ENCODE measurements at regions of chr14 and their contacts with region 1.

Region 1: GRCh38 chr14:58199726-58200479 is at the start of gene ACTR10:
- DNase-seq: peak; percentile 80 to 93 (median 88)
- ATAC-seq: peak; percentile 94
- H3K4me3 ChIP-seq: peak within 1 kb of the TSS; percentile 75
- H3K4me3 Mint-ChIP-seq: peak within 1 kb of the TSS; percentile 90 to 99 (median 97)
- H3K27ac ChIP-seq: peak within 1 kb of the TSS; percentile 87
- H3K27ac Mint-ChIP-seq: peak within 1 kb of the TSS; percentile 93 to 99 (median 98)
- H3K4me1 ChIP-seq: peaks cover 15 to 27% of the 10 kb centered on the region in 2 donors
- H3K4me1 Mint-ChIP-seq: peaks cover 21 to 60% (median 48%) of the 10 kb centered on the region in 7 donors
- H3K27me3 ChIP-seq: no peaks in the 10 kb centered on the region
- H3K27me3 Mint-ChIP-seq: peaks cover 0 to 7% (median 0%) of the 10 kb centered on the region in 5 donors
- total RNA-seq, gene ACTR10: 40.0 to 54.6 (median 50.4) TPM

Region 2: DNA sequence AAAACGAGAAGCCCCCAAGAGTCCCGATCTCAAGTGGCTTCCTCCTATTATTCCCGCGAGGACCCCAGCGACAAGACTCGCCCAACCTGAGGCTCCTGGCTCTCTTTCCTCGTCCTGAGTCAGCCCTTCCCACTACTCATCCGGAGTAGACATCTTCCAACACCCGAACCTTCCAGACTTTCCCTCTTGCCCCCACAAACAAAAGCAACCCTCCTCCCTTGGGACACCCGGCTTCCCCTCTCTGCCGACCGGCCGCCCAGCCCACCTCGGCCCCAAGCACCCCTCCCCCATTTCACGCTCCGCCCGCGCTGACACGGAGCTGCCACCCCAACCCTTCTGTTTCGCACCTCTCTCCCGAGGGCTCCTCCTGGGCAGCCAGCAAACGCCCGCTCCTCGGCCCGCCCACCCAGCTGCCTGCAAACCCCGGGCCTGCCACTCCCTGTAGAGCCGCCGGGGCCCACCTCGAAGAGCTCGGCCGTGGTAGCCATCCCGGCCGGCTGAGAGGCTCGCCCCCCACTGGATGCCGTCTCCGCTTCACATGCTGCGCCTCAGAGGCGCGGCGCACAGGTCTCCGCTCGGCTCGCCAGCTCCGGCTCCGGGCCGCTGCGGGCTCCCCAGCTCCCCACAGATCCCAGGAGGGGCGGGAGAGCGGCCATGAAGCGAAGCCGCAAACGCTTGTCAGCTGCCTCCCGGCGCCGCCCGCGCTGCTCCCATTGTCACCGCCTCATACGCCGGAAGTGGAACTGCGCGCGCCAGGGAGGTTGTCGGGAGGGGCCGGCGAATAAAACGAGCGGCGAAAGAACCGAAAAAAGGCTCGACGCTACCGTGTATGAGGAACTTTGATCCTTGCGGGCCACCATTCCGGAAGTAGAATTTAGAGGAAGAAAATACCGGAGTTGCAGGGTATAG is 931.5 kb before region 1 on chr14 and contains the starts of genes AP5M1 and EXOC5:
- CTCF ChIA-PET with region 1: no interaction called
- POLR2A ChIA-PET with region 1: interaction called, 3 read pairs
- intact Hi-C with region 1: loop called in 1 of 2 experiments (anchors 5 kb)
- DNase-seq: peak; percentile 78 to 95 (median 93)
- ATAC-seq: peak; percentile 89
- H3K4me3 ChIP-seq: peak within 1 kb of the TSS; percentile 89
- H3K4me3 Mint-ChIP-seq: peak within 1 kb of the TSS; percentile 97 to 100 (median 99)
- H3K27ac ChIP-seq: peak within 1 kb of the TSS; percentile 91
- H3K27ac Mint-ChIP-seq: peak within 1 kb of the TSS; percentile 98 to 100 (median 99)
- H3K4me1 ChIP-seq: peaks cover 29 to 34% of the 10 kb centered on the region in 2 donors
- H3K4me1 Mint-ChIP-seq: peaks cover 41 to 93% (median 76%) of the 10 kb centered on the region in 7 donors
- H3K27me3 ChIP-seq: no peaks in the 10 kb centered on the region
- H3K27me3 Mint-ChIP-seq: no peaks in the 10 kb centered on the region
- total RNA-seq, gene AP5M1: 42.3 to 62.8 (median 52.1) TPM
- total RNA-seq, gene EXOC5: 27.3 to 71.6 (median 42.2) TPM

Region 3: DNA sequence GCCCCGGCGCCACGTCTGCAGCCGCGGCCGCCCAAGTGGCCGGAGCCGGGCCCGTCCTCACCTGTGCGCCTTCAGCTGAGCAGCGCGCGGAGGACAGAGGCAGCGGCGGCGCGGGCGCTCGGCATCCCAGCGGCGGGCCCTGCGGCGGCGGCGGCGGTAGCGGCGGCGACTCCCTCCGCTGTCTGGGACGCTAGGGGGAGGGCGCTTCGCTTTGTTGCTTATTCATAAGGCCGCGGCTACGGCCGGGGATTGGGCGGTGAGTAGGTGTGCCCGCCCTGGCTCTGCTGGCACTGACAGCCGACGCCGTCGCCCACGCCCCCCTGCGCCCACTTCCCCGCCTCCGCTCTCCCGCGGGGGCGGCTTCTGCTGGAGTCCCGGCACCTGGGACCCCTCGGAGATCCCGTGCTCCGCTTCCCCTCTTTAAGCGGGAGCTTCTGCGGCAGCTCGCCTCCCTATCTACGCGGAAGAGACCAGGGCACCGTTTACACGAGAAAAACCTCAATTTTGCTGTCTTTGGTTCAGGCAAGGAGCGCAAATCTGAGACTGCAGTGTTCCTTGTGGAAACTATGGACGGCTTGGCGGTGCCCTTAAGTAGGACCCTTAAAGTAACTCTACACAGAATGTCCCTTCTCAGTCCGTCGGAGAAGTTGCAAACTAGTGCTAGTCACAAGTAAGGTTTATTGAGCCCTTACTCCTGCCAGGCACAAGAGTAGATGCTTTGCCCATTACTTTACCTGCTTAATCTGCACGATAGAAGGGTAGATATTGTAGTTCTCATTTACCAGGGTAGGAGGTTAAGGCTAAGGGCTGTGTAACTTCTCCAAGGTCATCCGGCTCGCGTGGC is 47.7 kb before region 1 on chr14 and contains the start of gene ARMH4:
- CTCF ChIA-PET with region 1: no interaction called
- POLR2A ChIA-PET with region 1: no interaction called
- intact Hi-C with region 1: loop called (anchors 1 kb)
- DNase-seq: peak; percentile 28 to 66 (median 54)
- ATAC-seq: peak; percentile 94
- H3K4me3 ChIP-seq: peak within 1 kb of the TSS; percentile 71
- H3K4me3 Mint-ChIP-seq: peak within 1 kb of the TSS; percentile 75 to 86 (median 80)
- H3K27ac ChIP-seq: no peak within 1 kb of the TSS
- H3K27ac Mint-ChIP-seq: no peak within 1 kb of the TSS
- H3K4me1 ChIP-seq: peaks cover 7 to 8% of the 10 kb centered on the region in 2 donors
- H3K4me1 Mint-ChIP-seq: peaks cover 9 to 21% (median 13%) of the 10 kb centered on the region in 7 donors
- H3K27me3 ChIP-seq: peaks cover 0 to 4% of the 10 kb centered on the region in 2 donors
- H3K27me3 Mint-ChIP-seq: peaks cover 56 to 73% (median 68%) of the 10 kb centered on the region in 5 donors
- total RNA-seq, gene ARMH4: not detected

Region 4: DNA sequence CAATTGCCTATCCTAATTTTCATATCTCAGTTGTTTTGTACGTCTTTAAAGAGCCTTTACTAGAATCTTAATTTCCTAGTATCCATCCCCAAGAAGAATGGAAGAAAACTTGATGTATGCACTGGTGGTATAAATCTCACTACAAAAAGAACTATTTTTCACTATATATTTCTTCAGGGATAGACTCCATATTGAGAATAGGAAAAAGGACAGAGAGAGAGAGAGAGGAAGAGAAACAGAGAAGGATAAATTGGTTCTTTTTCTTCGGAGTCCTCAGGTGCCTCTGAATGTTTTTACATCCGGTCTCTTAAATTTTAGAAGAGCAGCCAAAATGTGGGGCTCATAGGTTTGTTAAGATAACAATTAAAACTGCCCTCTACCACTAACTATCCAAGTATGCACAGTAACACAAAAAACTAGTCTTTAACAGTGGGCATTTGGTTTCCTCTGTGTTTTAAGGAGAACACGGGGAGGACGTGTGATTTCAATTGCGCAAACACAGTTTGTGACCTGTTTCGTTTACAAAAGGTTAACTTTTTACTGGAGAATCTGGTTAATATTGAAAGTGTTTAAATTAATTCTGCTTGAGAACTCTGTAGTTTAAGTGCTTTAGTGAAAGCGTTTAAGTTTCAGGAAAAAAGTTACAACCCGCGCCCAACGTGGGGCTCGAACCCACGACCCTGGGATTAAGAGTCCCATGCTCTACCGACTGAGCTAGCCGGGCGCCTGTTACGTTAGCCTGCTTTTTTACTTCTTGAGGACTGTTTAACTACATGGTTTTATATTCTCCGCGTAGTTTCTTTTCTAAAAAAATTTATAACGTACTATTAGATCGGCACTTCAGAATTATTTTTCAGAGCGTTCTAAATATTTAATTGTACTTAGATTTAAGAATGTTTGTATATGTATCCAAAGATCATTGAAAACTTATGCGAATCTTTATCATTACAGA is 39.6 kb after region 1 on chr14:
- CTCF ChIA-PET with region 1: no interaction called
- POLR2A ChIA-PET with region 1: interaction called, 20 read pairs
- intact Hi-C with region 1: loop called (anchors 1 kb)
- DNase-seq: peak; percentile 66 to 89 (median 84)
- ATAC-seq: peak; percentile 39
- H3K4me3 ChIP-seq: peak overlapping the region; percentile 78
- H3K4me3 Mint-ChIP-seq: no peak overlapping the region
- H3K27ac ChIP-seq: peak overlapping the region; percentile 75
- H3K27ac Mint-ChIP-seq: no peak overlapping the region
- H3K4me1 ChIP-seq: peaks cover 8 to 9% of the 10 kb centered on the region in 2 donors
- H3K4me1 Mint-ChIP-seq: peaks cover 11 to 30% (median 27%) of the 10 kb centered on the region in 7 donors
- H3K27me3 ChIP-seq: no peaks in the 10 kb centered on the region
- H3K27me3 Mint-ChIP-seq: peaks cover 0 to 2% (median 0%) of the 10 kb centered on the region in 5 donors

Region 5: DNA sequence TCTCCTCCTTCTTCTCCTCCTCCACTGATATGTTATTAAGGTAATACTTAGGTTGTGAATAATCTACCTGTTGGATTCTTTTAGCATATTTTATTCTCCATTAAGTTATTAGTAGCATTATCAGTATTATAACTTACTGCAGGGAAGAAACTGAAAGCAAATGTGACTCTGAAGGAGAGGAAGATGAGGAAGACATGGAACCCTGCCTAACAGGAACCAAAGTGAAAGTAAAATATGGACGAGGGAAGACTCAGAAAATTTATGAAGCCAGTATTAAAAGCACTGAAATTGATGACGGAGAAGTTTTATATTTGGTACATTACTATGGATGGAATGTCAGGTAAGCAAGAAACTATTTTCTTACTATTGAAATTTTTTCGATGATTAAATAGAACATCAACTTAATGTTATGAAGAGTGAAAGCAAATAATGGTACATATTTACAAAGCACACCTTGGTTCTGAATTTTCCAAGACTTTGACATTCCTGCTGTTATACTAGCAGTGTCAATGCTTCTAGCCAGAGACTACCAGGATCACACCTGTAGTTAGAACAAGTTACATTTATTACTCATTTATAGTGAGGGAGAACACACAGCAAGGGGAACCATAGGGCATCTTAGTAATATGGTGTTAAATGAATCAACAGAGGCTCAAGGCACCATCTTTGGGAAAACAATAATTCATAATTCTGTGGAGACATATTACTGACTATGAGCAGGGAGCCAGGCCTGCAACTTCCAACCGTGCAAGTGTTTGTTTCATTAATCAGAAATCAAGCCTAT is 153.8 kb after region 1 on chr14:
- CTCF ChIA-PET with region 1: no interaction called
- POLR2A ChIA-PET with region 1: no interaction called
- intact Hi-C with region 1: loop called in 1 of 2 experiments (anchors 5 kb)
- DNase-seq: no peak
- ATAC-seq: peak; percentile 34
- H3K4me3 ChIP-seq: peak overlapping the region; percentile 15
- H3K4me3 Mint-ChIP-seq: peak overlapping the region; percentile 39 to 85 (median 70)
- H3K27ac ChIP-seq: peak overlapping the region; percentile 57
- H3K27ac Mint-ChIP-seq: peak overlapping the region; percentile 33 to 89 (median 71)
- H3K4me1 ChIP-seq: peaks cover 0 to 10% of the 10 kb centered on the region in 2 donors
- H3K4me1 Mint-ChIP-seq: peaks cover 13 to 50% (median 39%) of the 10 kb centered on the region in 7 donors
- H3K27me3 ChIP-seq: no peaks in the 10 kb centered on the region
- H3K27me3 Mint-ChIP-seq: no peaks in the 10 kb centered on the region

Region 6: GRCh38 chr14:59507063-59507780 is 1307.3 kb after region 1 on chr14:
- CTCF ChIA-PET with region 1: no interaction called
- POLR2A ChIA-PET with region 1: no interaction called
- intact Hi-C with region 1: no loop called
- DNase-seq: peak in 8 of 9 donors; percentile 9 to 47 (median 34)
- ATAC-seq: peak; percentile 90
- H3K4me3 ChIP-seq: no peak overlapping the region
- H3K4me3 Mint-ChIP-seq: no peak overlapping the region
- H3K27ac ChIP-seq: no peak overlapping the region
- H3K27ac Mint-ChIP-seq: no peak overlapping the region
- H3K4me1 ChIP-seq: peaks cover 0 to 4% of the 10 kb centered on the region in 2 donors
- H3K4me1 Mint-ChIP-seq: peaks cover 3 to 17% (median 15%) of the 10 kb centered on the region in 7 donors
- H3K27me3 ChIP-seq: no peaks in the 10 kb centered on the region
- H3K27me3 Mint-ChIP-seq: peaks cover 8 to 18% (median 13%) of the 10 kb centered on the region in 5 donors

Region 7: GRCh38 chr14:59803052-59803540 is 1603.2 kb after region 1 on chr14:
- CTCF ChIA-PET with region 1: no interaction called
- POLR2A ChIA-PET with region 1: no interaction called
- intact Hi-C with region 1: no loop called
- DNase-seq: no peak
- ATAC-seq: no peak
- H3K4me3 ChIP-seq: no peak overlapping the region
- H3K4me3 Mint-ChIP-seq: no peak overlapping the region
- H3K27ac ChIP-seq: no peak overlapping the region
- H3K27ac Mint-ChIP-seq: no peak overlapping the region
- H3K4me1 ChIP-seq: no peaks in the 10 kb centered on the region
- H3K4me1 Mint-ChIP-seq: no peaks in the 10 kb centered on the region
- H3K27me3 ChIP-seq: no peaks in the 10 kb centered on the region
- H3K27me3 Mint-ChIP-seq: peaks cover 6 to 30% (median 18%) of the 10 kb centered on the region in 5 donors